Transverse colon (tissue), 4 donors: ENCODE measurements at regions of chr20 and their contacts with region 1.

Region 1: GRCh38 chr20:9912858-9913434 is 74.1 kb upstream of the PAK5 start:
- DNase-seq: peak; percentile 21
- H3K4me3 ChIP-seq: no peak overlapping the region
- H3K27ac ChIP-seq: no peak overlapping the region
- H3K4me1 ChIP-seq: no peaks in the 10 kb centered on the region
- H3K27me3 ChIP-seq: peaks cover 5% of the 10 kb centered on the region
- CTCF ChIP-seq: peak; percentile 59 to 79 (median 75)
- EP300 ChIP-seq: no peak
- POLR2A ChIP-seq: no peak

Region 2: DNA sequence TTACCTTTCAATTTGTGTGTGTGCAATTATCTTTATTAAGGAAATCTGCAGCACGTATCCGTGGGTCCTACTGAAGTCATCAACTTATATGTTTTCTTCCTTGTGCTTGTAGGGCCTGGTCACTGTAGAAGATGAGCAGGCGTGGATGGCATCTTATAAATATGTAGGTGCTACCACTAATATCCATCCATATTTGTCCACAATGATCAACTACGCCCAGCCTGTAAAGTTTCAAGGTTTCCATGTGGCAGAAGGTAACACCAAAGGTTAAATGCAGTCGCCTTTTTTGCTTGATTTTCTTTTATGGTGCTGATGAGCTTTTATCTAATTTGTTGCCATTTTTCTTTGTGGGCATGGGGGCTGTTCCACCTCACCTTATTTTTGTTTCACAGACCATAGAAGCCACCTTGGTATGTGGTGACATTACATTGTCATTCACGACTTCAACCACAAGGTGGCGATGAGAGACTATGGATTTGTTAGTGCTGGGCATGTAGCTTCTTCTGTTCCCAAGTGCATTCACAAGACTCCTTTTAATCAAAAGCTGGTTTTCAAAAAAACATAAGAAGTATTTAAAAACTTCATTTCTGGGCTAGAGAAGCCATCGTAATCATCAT is 505.0 kb before region 1 on chr20:
- in situ Hi-C with region 1: loop called in 1 of 4 experiments (anchors 25 kb)
- intact Hi-C with region 1: no loop called
- DNase-seq: peak; percentile 59
- H3K4me3 ChIP-seq: no peak overlapping the region
- H3K27ac ChIP-seq: no peak overlapping the region
- H3K4me1 ChIP-seq: no peaks in the 10 kb centered on the region
- H3K27me3 ChIP-seq: no peaks in the 10 kb centered on the region
- CTCF ChIP-seq: peak; percentile 71 to 84 (median 78)
- EP300 ChIP-seq: no peak
- POLR2A ChIP-seq: no peak

Region 3: GRCh38 chr20:9616833-9617489 is 296.0 kb before region 1 on chr20:
- in situ Hi-C with region 1: loop called (anchors 10 to 25 kb)
- intact Hi-C with region 1: loop called (anchors 10 kb)
- DNase-seq: peak; percentile 56
- H3K4me3 ChIP-seq: no peak overlapping the region
- H3K27ac ChIP-seq: no peak overlapping the region
- H3K4me1 ChIP-seq: no peaks in the 10 kb centered on the region
- H3K27me3 ChIP-seq: peaks cover 4% of the 10 kb centered on the region
- CTCF ChIP-seq: peak; percentile 64 to 82 (median 78)
- EP300 ChIP-seq: no peak
- POLR2A ChIP-seq: no peak